Activated T-helper 1 cell treated with anti-CD3 and anti-CD28 coated beads, Interleukin-12 subunit alpha, Interleukin-12 subunit beta, Interleukin-2, Interleukin-4 antibody, amounts not matched to agents 30 ng/mL and 10 ng/mL and 1 ng/mL, durations not matched to agents 14 hours and 24 hours and 36 hours (primary cell): ENCODE measurements at regions of chr11 and their contacts with region 1.

Region 1: GRCh38 chr11:125625630-125626287 is 796 bp downstream of the CHEK1 start:
- DNase-seq: peak; percentile 82
- H3K4me3 Mint-ChIP-seq: peak overlapping the region; percentile 98
- H3K27ac Mint-ChIP-seq: peak overlapping the region; percentile 99
- H3K4me1 Mint-ChIP-seq: peaks cover 38% of the 10 kb centered on the region
- H3K27me3 Mint-ChIP-seq: no peaks in the 10 kb centered on the region

Region 2: DNA sequence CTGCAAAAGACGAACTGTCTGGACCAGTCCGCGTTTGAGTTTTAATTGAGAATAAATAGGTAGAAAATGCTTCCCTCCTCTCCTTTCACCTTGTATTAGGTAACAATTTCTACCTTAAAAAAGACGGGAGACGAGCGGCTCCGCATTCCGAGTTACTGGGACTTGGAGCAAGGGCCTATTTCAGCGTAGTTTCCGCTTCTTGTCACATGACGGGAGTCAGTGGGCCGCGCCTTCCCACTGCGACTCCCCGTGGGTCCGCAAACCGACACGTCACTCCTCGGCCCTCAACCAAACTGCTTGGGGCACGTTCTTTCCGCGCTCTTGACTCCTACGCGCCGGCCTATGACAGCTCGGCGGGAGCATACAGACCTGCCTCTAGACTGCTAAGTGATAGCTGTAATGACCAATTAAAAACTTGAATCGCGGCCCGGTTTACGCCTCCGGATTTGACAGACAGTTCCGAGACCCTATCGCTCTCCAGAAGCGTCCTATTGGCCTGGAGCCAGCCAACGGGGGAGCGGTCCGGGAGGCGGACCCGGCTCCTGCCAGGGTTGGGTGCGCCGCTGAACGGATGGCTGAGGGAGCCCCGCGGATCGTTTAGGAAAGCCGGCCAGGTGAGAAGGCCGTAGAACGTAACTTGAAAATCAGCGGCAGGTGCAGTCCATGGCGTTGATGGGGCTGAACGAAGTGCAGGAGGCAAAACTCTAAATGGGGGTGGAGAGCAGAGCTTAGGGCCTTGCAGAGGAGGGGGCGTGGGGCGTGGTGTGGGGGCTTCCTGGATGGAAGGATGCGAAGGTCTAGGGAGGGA is 33.2 kb before region 1 on chr11 and contains the start of gene STT3A:
- intact Hi-C with region 1: loop called (anchors 1 kb)
- DNase-seq: peak; percentile 98
- H3K4me3 Mint-ChIP-seq: peak within 1 kb of the TSS; percentile 98
- H3K27ac Mint-ChIP-seq: peak within 1 kb of the TSS; percentile 94
- H3K4me1 Mint-ChIP-seq: peaks cover 50% of the 10 kb centered on the region
- H3K27me3 Mint-ChIP-seq: no peaks in the 10 kb centered on the region
- total RNA-seq, gene STT3A: 164 and 171 TPM in 2 replicates

Region 3: GRCh38 chr11:125874556-125875124 is 248.9 kb after region 1 on chr11:
- intact Hi-C with region 1: loop called (anchors 1 kb)
- DNase-seq: no peak
- H3K4me3 Mint-ChIP-seq: no peak overlapping the region
- H3K27ac Mint-ChIP-seq: no peak overlapping the region
- H3K4me1 Mint-ChIP-seq: no peaks in the 10 kb centered on the region
- H3K27me3 Mint-ChIP-seq: peaks cover 9% of the 10 kb centered on the region

Region 4: GRCh38 chr11:126194121-126194543 is 568.4 kb after region 1 on chr11:
- intact Hi-C with region 1: loop called (anchors 5 kb)
- DNase-seq: no peak
- H3K4me3 Mint-ChIP-seq: no peak overlapping the region
- H3K27ac Mint-ChIP-seq: no peak overlapping the region
- H3K4me1 Mint-ChIP-seq: no peaks in the 10 kb centered on the region
- H3K27me3 Mint-ChIP-seq: no peaks in the 10 kb centered on the region

Region 5: GRCh38 chr11:126303623-126304456 is 678.1 kb after region 1 on chr11 and contains the start of gene DCPS:
- intact Hi-C with region 1: loop called (anchors 5 kb)
- DNase-seq: peak; percentile 88
- H3K4me3 Mint-ChIP-seq: peak within 1 kb of the TSS; percentile 98
- H3K27ac Mint-ChIP-seq: peak within 1 kb of the TSS; percentile 98
- H3K4me1 Mint-ChIP-seq: peaks cover 35% of the 10 kb centered on the region
- H3K27me3 Mint-ChIP-seq: no peaks in the 10 kb centered on the region
- total RNA-seq, gene DCPS: 40.4 and 40.5 TPM in 2 replicates